ENCODE measurements at regions of chr19 and their contacts with region 1.

Region 1: DNA sequence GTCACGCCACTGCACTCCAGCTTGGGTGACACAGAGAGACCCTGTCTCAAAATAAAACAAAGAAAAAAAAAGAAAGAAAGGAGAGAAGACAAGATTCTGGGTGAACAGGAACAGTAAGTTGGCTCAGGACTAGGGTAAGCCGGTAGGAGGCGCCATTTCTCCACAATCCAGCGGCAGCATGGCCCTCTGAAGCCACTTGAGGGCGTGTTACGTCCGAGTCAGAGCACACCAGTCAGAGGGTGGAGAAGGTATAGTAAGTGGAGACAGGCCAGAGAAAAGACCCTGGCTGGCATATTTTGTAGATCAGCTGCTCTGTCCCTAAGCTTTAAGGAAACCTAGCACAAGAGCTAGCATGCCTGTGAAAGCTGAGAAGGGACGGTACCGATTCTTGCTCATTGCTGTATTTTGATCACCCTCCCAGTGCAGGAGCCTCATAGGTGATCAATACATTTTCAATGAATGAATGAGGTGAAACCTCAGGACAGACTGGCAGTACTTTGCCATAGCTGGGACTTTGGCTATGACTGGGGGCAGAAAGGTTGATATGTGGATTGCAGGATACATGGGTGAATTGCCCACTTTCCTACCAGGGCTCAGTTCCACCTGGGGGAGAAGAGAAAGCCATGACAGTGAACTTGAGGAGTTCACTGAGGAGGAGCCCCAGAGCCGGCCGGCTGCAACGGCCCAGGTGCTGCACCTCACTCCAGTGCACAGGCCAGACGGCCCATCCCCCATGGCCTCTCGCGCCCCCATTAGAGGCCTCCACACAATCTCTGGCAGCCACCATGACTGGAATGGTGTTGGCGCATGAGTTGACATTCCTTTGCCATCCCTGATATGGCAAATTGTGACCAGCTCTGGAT is 23.5 kb downstream of the POU2F2 start:
- DNase-seq: peak; percentile 68
- H3K4me3 ChIP-seq: no peak overlapping the region
- H3K27ac ChIP-seq: no peak overlapping the region
- H3K4me1 ChIP-seq: peaks cover 35% of the 10 kb centered on the region
- H3K27me3 ChIP-seq: no peaks in the 10 kb centered on the region
- CTCF ChIP-seq: peak; percentile 100

Region 2: DNA sequence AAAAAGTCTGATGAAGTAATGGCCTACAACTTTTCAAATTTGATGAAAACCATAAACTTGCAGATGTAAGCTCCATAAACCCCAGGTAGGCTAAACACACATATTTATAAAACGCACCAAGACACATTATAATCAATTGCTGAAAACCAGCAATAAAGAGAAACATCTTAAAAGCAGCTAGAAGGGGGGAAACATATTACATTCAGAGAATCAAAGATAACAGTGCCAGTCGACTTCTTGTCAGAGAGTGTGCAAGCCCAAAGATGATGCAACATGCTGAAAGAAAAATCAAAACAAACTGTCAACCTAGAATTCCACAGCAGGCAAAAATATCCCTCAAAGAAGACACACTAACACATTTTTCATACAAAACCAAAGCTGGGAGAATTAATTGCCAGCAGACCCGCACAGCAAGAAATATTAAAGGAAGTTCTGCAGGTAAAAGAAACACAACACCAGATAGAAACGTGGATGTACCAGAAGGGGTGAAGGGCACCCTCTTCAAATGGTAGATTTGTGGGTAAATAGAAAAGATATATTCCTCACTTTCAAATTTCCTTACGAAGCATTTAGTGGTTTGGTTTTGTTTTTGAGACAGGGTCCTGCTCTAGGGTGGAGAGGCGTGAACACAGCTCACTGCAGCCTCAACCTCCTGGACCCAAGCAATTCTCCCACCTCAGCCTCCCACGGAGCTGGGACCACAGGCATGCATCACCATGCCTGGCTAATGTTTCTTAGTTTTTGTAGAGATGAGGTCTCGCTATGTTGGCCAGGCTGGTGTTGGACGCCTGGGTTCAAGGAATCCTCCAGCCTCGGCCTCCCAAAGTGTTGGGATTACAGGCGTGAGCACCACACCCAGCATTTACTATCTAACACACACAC is 98.3 kb before region 1 on chr19:
- CTCF ChIA-PET with region 1: no interaction called
- dilution Hi-C with region 1: loop called (anchors 5 kb)
- in situ Hi-C with region 1: no loop called
- intact Hi-C with region 1: no loop called
- DNase-seq: no peak
- H3K4me3 ChIP-seq: no peak overlapping the region
- H3K27ac ChIP-seq: no peak overlapping the region
- H3K4me1 ChIP-seq: no peaks in the 10 kb centered on the region
- H3K27me3 ChIP-seq: no peaks in the 10 kb centered on the region
- CTCF ChIP-seq: no peak

Region 3: DNA sequence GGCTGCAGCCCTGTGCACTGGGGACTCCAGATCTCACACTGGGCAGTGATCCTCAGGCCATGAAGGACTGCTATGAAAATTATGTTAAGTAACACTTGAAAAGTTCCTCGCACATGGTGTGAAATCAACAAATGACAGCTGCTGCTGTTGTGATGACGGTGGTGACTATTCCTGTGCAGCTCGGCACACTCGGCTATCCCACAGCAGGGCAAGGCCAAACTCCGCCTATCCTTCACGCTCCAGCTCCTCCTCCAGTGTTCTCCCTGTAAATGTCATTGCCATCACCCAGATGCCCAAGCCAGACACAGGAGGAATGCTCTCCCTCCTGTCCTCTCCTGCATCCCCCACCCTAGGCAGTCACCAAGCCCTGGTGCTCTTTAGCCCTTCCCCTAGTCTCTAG is 70.1 kb before region 1 on chr19:
- CTCF ChIA-PET with region 1: no interaction called
- dilution Hi-C with region 1: no loop called
- in situ Hi-C with region 1: no loop called
- intact Hi-C with region 1: no loop called
- DNase-seq: no peak
- H3K4me3 ChIP-seq: no peak overlapping the region
- H3K27ac ChIP-seq: no peak overlapping the region
- H3K4me1 ChIP-seq: no peaks in the 10 kb centered on the region
- H3K27me3 ChIP-seq: no peaks in the 10 kb centered on the region
- CTCF ChIP-seq: no peak

Region 4: GRCh38 chr19:42054205-42054604 is 54.6 kb before region 1 on chr19:
- CTCF ChIA-PET with region 1: no interaction called
- dilution Hi-C with region 1: no loop called
- in situ Hi-C with region 1: no loop called
- intact Hi-C with region 1: no loop called
- DNase-seq: no peak
- H3K4me3 ChIP-seq: no peak overlapping the region
- H3K27ac ChIP-seq: no peak overlapping the region
- H3K4me1 ChIP-seq: peaks cover 38% of the 10 kb centered on the region
- H3K27me3 ChIP-seq: no peaks in the 10 kb centered on the region
- CTCF ChIP-seq: no peak

Region 5: DNA sequence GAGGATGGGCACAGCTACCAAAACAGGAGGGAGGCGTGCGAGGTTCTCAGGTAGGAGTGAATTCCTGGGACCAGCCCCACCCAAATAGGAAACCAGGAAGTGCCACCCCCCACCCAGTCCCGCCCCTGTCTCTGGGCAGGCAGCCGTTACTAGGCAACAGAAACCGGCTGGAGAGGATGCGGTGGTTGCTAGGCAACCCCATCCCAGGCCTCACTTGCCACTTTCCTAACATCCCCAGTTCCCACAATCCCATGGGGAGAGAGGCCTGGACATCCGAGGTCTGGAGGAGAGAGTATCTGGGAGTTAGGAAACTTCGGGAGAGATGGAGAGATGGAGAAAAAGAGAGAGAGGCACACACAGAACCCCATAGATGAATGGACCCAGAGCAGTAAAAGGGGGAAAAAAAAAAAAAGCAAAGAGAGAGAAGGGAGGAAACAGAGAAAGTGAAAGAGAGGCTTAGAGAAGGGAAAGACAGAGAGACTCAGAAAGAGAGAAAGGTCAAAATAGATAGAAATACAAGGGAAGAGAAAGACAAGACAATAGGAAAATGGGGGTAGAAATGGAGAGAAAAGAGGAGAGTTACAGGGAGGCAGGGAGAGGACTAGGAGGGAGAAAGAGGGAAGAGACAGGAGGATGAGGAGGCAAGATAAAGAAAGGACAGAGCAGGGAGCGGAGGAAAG is 42.5 kb before region 1 on chr19:
- CTCF ChIA-PET with region 1: no interaction called
- dilution Hi-C with region 1: no loop called
- in situ Hi-C with region 1: no loop called
- intact Hi-C with region 1: no loop called
- DNase-seq: no peak
- H3K4me3 ChIP-seq: no peak overlapping the region
- H3K27ac ChIP-seq: no peak overlapping the region
- H3K4me1 ChIP-seq: no peaks in the 10 kb centered on the region
- H3K27me3 ChIP-seq: peaks cover 9% of the 10 kb centered on the region
- CTCF ChIP-seq: no peak

Region 6: GRCh38 chr19:42158926-42159325 is 50.2 kb after region 1 on chr19:
- CTCF ChIA-PET with region 1: no interaction called
- dilution Hi-C with region 1: no loop called
- in situ Hi-C with region 1: no loop called
- intact Hi-C with region 1: no loop called
- DNase-seq: no peak
- H3K4me3 ChIP-seq: no peak overlapping the region
- H3K27ac ChIP-seq: no peak overlapping the region
- H3K4me1 ChIP-seq: no peaks in the 10 kb centered on the region
- H3K27me3 ChIP-seq: no peaks in the 10 kb centered on the region
- CTCF ChIP-seq: no peak

Region 7: DNA sequence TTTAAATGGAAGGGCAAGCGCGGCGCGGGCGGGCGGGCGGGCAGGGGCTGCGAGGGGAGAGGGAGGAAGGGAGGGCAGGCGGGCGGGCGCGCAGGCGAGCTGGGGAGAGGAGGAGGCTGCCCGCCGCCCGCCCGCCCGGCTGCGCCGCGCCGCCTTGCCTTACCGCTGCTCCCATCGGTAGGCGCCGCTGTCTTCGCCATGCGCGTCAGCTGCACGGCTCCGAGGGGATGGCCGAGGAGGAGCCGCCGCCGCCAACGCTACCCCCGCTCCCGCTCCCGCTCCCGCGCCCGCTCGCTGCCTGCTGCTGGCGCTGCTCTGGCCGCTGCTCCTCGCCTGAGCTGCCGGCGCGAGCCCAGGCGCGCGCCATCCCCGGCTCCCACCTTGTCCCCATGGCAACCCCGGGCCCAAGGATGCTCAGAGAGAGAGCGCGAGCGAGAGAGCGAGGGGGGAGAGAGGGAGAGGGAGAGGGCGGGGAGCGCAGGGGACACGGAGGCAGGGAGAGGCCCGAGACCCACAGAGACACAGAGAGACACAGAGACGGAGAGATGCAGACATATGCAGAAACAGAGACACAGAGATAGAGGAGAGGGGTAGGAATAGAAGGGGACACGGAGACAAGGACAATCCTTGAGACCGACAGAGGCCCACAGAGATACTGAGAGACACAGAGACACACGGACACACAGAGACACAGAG is 68.4 kb after region 1 on chr19:
- CTCF ChIA-PET with region 1: interaction called, 4 read pairs
- dilution Hi-C with region 1: loop called (anchors 5 kb)
- in situ Hi-C with region 1: no loop called
- intact Hi-C with region 1: loop called (anchors 2 kb)
- DNase-seq: peak; percentile 76
- H3K4me3 ChIP-seq: peak overlapping the region in 2 of 3 experiments; percentile 13 to 50
- H3K27ac ChIP-seq: no peak overlapping the region
- H3K4me1 ChIP-seq: peaks cover 11% of the 10 kb centered on the region
- H3K27me3 ChIP-seq: peaks cover 20% of the 10 kb centered on the region
- CTCF ChIP-seq: peak; percentile 16 to 45

Region 8: GRCh38 chr19:42199440-42200115 is 90.8 kb after region 1 on chr19:
- CTCF ChIA-PET with region 1: no interaction called
- dilution Hi-C with region 1: no loop called
- in situ Hi-C with region 1: loop called in 1 of 2 experiments (anchors 10 kb)
- intact Hi-C with region 1: no loop called
- DNase-seq: peak; percentile 80
- H3K4me3 ChIP-seq: no peak overlapping the region
- H3K27ac ChIP-seq: peak overlapping the region; percentile 28
- H3K4me1 ChIP-seq: peaks cover 29% of the 10 kb centered on the region
- H3K27me3 ChIP-seq: no peaks in the 10 kb centered on the region
- CTCF ChIP-seq: peak; percentile 49 to 67

Region 9: GRCh38 chr19:42423462-42424344 is 314.9 kb after region 1 on chr19:
- CTCF ChIA-PET with region 1: no interaction called
- dilution Hi-C with region 1: no loop called
- in situ Hi-C with region 1: loop called in 1 of 2 experiments (anchors 25 kb)
- intact Hi-C with region 1: no loop called
- DNase-seq: peak; percentile 86
- H3K4me3 ChIP-seq: peak overlapping the region; percentile 59 to 66 (median 63)
- H3K27ac ChIP-seq: peak overlapping the region; percentile 12
- H3K4me1 ChIP-seq: peaks cover 45% of the 10 kb centered on the region
- H3K27me3 ChIP-seq: no peaks in the 10 kb centered on the region
- CTCF ChIP-seq: no peak

Region 10: DNA sequence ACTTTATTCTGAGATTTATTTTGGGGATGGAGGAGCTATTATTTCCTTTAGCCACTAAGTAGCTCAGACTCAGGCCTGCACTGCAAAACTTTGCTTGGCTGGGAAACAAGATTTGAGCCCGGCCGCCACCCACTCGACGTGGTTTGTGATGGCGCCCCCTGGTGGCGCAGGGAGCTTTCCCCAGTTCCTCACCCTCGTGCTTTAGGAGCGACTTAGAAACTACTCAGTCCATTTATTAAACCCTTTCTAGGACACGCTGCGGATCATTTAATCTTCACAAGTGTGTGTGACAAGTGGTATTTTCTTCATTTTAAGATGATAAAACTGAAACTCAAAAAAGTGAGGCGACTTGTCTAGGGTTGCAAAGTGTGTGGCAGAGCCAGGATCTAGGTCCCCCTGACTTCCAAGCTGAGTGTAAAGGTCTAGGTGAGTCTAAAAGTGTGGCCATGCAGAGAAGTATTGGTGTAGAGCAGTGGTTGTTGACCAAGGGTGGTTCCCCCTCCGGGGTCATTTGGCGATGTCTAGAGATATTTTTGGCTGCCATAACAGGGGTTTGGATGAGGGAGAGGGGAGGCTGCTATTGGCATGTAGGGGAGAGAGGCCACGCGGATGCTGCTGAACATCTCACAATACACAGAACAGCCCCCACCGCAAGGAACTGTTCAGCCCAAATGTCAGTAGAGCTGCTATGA is 331.7 kb after region 1 on chr19:
- CTCF ChIA-PET with region 1: no interaction called
- dilution Hi-C with region 1: no loop called
- in situ Hi-C with region 1: loop called in 1 of 2 experiments (anchors 10 kb)
- intact Hi-C with region 1: loop called (anchors 1 kb)
- DNase-seq: peak; percentile 38
- H3K4me3 ChIP-seq: no peak overlapping the region
- H3K27ac ChIP-seq: no peak overlapping the region
- H3K4me1 ChIP-seq: no peaks in the 10 kb centered on the region
- H3K27me3 ChIP-seq: no peaks in the 10 kb centered on the region
- CTCF ChIP-seq: peak; percentile 89 to 96